Activated CD4-positive, alpha-beta memory T cell treated with anti-CD3 and anti-CD28 coated beads, Interleukin-2, amount 10 ng/mL, durations not matched to agents 7 days and 5 days (primary cell): ENCODE measurements at regions of chr2 and their contacts with region 1.

Region 1: GRCh38 chr2:30165050-30165520 is 18.3 kb downstream of the YPEL5 start:
- DNase-seq: peak; percentile 69
- H3K4me3 Mint-ChIP-seq: no peak overlapping the region
- H3K27ac Mint-ChIP-seq: no peak overlapping the region
- H3K4me1 Mint-ChIP-seq: peaks cover 3% of the 10 kb centered on the region
- H3K27me3 Mint-ChIP-seq: no peaks in the 10 kb centered on the region

Region 2: DNA sequence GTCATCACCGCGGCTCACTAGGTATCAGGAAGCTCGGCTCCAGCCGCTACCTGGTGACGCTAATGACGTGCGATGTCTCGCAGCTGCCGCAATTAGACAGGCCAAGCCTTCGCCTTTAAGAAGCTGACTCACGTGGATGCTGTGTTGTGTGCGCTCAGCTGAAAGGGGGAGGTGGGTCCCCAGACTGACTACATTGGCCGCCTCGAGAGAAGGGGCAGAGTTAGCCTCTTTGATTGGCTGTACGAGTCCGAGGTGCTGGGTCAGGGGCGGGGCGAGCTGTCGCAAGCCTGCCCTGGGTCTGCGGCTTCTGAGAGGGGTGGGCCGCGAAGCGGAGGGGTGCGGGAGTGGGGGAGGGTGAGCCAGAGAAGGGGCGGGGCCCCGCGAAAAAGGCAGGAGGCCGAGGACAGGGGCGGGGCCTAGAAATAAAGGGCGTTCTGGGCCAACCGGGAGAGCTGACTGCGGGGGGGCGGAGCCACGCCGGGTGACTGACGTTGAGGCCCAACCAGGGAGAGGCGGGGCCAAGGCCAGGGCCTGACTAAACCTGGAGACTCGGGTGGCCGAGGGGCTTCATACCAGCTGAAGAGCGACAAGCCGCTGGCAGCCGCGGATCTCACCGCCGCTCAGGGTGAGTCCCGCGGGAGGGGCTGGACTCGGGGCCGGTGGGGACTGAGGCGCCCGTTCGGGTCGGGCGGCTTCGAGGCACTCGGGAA is 18.5 kb before region 1 on chr2 and contains the start of gene YPEL5:
- CTCF ChIA-PET with region 1: interaction called, 80 read pairs
- POLR2A ChIA-PET with region 1: interaction called, 11 read pairs
- DNase-seq: peak; percentile 99
- H3K4me3 Mint-ChIP-seq: peak within 1 kb of the TSS; percentile 81
- H3K27ac Mint-ChIP-seq: peak within 1 kb of the TSS; percentile 93
- H3K4me1 Mint-ChIP-seq: peaks cover 40% of the 10 kb centered on the region
- H3K27me3 Mint-ChIP-seq: no peaks in the 10 kb centered on the region
- total RNA-seq, gene YPEL5: 51.2 to 52.9 TPM

Region 3: GRCh38 chr2:30188292-30188691 is 23.2 kb after region 1 on chr2:
- CTCF ChIA-PET with region 1: interaction called, 11 read pairs
- POLR2A ChIA-PET with region 1: no interaction called
- DNase-seq: no peak
- H3K4me3 Mint-ChIP-seq: no peak overlapping the region
- H3K27ac Mint-ChIP-seq: no peak overlapping the region
- H3K4me1 Mint-ChIP-seq: peaks cover 5% of the 10 kb centered on the region
- H3K27me3 Mint-ChIP-seq: peaks cover 4% of the 10 kb centered on the region

Region 4: DNA sequence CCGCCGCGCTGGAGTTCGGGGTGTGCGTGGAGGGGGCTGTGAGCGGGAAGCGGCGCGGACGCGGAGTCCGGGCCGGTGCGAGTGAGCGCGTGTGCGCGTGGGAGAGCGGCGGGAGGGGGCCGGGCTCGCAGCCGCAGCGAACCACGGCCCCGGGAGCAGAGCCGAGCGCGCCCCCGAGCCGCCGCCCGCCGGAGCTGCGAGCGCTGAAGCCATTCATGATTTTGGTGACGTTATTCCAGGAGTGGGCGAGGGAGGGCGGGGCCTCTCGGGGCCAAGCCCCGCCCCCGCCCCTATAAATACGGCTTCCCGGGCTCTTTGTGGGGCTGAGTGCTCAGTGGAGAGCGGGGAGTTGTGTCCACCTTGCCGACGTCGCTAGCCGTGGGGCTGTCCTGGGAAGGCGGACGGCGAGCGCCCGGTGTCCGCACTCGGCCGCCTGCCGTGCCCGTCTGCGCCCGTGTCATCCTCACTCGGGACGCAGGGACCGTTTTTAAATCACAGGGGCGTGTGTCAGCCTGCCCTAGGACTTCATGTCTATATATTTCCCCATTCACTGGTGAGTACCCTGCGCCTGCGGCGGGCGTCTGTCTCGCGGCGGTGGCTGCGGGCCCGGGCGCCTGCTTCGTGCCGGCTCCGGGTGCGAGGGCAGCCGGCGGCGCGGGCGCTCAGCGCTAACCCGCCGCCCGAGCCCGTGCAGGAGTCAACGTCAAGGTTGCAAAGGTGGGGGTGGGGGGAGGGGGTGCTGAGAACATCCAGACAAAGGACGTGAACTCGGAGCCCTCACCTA is 66.3 kb after region 1 on chr2 and contains the start of gene LBH:
- CTCF ChIA-PET with region 1: interaction called, 18 read pairs
- POLR2A ChIA-PET with region 1: interaction called, 7 read pairs
- DNase-seq: peak; percentile 88
- H3K4me3 Mint-ChIP-seq: peak within 1 kb of the TSS; percentile 75
- H3K27ac Mint-ChIP-seq: peak within 1 kb of the TSS; percentile 79
- H3K4me1 Mint-ChIP-seq: peaks cover 58% of the 10 kb centered on the region
- H3K27me3 Mint-ChIP-seq: peaks cover 11% of the 10 kb centered on the region
- total RNA-seq, gene LBH: 105 to 110 TPM

Region 5: DNA sequence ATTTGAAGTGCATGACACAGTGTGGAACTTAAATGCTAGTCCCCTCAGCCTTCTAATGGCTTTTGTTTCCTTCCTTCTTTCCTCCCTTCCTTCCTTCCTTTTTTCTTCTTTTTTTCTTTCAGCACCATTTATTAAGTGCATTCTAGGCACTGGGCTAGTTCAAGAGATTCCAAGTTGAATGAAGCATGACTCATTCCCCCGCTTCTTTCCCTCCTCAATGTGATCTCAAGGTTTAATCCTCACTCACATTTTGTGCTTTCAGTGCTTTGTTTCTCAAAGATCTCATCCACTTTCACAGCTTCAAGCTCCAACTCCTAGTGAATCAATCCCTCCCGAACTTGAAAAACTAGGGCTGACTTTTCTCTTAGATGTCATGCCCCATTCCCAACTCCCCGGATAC is 156.4 kb after region 1 on chr2:
- CTCF ChIA-PET with region 1: no interaction called
- POLR2A ChIA-PET with region 1: no interaction called
- DNase-seq: no peak
- H3K4me3 Mint-ChIP-seq: no peak overlapping the region
- H3K27ac Mint-ChIP-seq: no peak overlapping the region
- H3K4me1 Mint-ChIP-seq: peaks cover 1% of the 10 kb centered on the region
- H3K27me3 Mint-ChIP-seq: no peaks in the 10 kb centered on the region

Region 6: DNA sequence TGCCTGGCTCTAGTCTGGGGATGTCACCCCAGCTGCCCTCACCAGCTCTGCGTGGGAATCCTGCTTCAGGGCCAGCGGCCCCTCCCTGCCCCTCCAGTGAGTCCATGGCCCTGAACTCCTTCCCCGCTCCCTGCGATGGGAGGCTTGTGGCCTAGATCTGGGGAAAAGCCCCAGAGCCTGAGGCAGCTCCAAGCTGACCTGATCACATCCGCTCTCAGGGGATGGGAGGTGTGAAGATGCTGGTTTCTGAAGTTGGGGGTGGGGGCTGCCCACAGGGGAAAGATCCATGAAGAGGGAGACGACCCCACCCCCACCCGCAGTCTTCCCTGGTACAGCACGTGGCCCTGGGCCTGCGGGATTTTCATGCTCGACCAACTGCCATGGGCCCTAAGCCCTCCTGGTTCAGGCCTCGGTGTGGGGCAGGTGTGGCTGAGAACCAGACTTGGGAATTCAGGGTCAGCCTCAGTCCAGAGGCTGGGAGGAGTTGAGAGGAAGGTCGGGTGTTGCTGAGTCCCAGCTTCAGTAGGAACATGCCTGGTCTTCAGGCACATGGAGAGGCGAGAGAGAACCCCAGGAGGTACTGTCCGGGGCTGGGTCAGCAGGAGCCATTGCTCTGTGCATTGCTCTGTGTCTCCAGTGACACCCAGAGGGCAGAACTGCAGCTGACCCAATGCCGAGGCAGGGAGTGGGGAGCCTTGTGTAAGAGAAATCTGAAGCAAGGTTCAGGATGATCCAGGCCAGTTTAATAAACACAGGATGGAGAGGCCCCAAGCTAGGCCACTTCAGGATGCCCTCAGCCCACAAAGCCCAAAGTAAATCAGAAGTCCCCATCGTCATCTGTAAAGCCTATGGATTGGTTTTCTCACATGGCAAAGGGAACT is 527.1 kb after region 1 on chr2:
- CTCF ChIA-PET with region 1: interaction called, 19 read pairs
- POLR2A ChIA-PET with region 1: no interaction called
- DNase-seq: no peak
- H3K4me3 Mint-ChIP-seq: no peak overlapping the region
- H3K27ac Mint-ChIP-seq: no peak overlapping the region
- H3K4me1 Mint-ChIP-seq: no peaks in the 10 kb centered on the region
- H3K27me3 Mint-ChIP-seq: peaks cover 3% of the 10 kb centered on the region